PC-9 (cell line): ENCODE measurements at regions of chr5 and their contacts with region 1.

Region 1: DNA sequence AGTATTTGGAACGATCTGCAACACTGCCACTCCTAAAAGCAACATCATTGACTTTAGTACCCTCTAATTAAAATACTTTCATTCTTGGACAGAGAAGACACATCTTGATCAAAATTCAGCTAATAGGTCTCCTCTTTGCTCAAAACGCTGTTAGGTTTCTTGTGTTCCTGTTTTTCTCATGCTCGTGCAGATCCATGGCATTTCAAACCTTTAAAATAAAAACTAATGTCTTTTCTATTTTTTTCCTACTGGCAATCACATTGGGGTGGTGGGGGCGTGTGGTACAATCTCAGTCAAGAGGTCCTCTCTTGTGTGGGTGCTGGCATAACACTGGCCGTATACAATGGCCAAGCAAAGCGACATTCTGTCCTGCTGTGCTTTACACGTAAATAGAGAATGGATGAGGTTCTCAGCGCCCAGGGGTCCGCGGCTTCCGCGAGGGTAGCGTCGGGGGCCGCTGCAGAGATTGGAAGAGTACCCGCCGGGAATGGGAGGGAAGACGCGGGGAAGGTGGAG is 315 bp upstream of the GPR150 start:
- DNase-seq: no peak
- H3K4me3 ChIP-seq: peak overlapping the region; percentile 60; the same call in 1 of the 2 replicates
- H3K27ac ChIP-seq: no peak overlapping the region
- H3K4me1 ChIP-seq: 0 out of 2 replicates have a peak, but pooled peaks cover 4% of the 10 kb centered on the region
- H3K27me3 ChIP-seq: peaks cover 13% of the 10 kb centered on the region; the same call in 1 of the 2 replicates
- CTCF ChIP-seq: no peak

Region 2: DNA sequence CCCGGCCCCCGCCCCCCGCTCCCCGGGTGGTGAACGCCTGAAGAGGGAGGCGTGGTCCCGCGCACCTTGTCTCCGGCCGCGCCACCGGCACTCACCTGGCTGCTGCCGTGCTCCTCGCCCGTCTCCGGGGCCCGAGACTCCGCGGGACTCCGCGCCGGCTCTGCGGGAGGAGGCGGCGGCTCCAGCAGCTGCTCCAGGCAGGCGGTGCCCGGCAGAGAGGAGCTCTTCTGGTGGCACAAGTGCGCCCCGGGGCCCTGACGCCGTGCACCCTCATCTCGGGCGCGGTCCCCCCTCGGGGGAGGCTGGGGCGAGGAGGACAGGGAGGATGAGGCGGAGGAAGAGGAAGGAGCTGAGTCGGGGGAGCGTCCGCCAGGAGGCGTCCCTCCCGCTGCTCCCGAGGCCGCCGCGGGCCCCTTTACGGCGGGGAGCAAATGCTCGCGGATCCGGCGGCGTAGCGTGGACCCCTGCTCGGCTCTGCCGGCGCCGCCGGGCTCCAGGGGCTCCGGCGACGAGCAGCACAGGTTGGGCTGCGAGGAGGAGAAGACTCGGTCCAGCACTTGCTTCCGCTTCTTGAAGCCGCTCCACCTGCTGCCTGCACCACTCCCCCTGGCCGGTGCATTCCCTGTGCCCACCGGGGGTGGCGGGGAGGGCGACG is 335.7 kb before region 1 on chr5:
- CTCF ChIA-PET with region 1: no interaction called
- POLR2A ChIA-PET with region 1: no interaction called
- intact Hi-C with region 1: loop called (anchors 10 kb)
- DNase-seq: peak in 1 of 2 experiments; percentile 70
- H3K4me3 ChIP-seq: peak overlapping the region; percentile 95
- H3K27ac ChIP-seq: no peak overlapping the region
- H3K4me1 ChIP-seq: peaks cover 13% of the 10 kb centered on the region; the same call in 1 of the 2 replicates
- H3K27me3 ChIP-seq: peaks cover 17% of the 10 kb centered on the region
- CTCF ChIP-seq: peak; percentile 66

Region 3: GRCh38 chr5:95554647-95555548 is 64.7 kb before region 1 on chr5 and contains the starts of genes ARSK and SKIC3:
- CTCF ChIA-PET with region 1: no interaction called
- POLR2A ChIA-PET with region 1: no interaction called
- intact Hi-C with region 1: no loop called
- DNase-seq: peak; percentile 92 to 96
- H3K4me3 ChIP-seq: peak within 1 kb of the TSS; percentile 71
- H3K27ac ChIP-seq: peak within 1 kb of the TSS; percentile 84
- H3K4me1 ChIP-seq: peaks cover 16% of the 10 kb centered on the region
- H3K27me3 ChIP-seq: no peaks in the 10 kb centered on the region
- CTCF ChIP-seq: no peak; the same call in 1 of the 2 replicates
- total RNA-seq, gene ARSK: 5.2 and 5.8 TPM in 2 replicates
- total RNA-seq, gene SKIC3: 43.7 and 50.7 TPM in 2 replicates

Region 4: DNA sequence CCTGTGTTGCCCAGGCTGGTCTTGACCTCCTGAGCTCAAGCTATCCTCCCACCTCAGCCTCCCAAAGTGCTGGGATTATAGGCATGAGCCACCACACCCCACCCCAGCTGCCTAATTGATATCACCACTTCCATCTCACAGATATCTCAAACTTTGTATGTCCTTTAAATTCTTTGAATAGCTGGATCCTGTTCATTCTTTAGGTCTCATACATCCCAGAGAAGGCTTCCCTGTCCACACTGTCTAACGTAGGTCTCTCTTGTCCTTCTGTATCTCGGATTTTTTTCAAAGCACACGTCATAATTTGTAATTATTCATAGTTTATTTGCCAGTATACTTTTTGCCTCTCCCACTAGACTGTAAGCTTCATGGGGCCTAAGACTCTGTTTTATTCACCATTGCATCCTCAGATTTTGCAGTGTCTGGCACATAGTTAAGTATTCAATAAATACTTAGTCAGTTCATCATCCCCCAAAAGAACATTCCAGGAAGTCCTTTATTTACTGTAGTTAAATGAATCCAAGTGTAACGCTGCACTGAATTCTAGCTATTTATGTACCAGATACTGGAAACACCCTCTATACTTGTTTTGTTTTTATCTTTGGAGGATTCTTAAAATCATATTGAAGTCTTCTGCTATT is 54.2 kb before region 1 on chr5:
- CTCF ChIA-PET with region 1: no interaction called
- POLR2A ChIA-PET with region 1: no interaction called
- intact Hi-C with region 1: no loop called
- DNase-seq: no peak
- H3K4me3 ChIP-seq: no peak overlapping the region
- H3K27ac ChIP-seq: no peak overlapping the region
- H3K4me1 ChIP-seq: no peaks in the 10 kb centered on the region
- H3K27me3 ChIP-seq: no peaks in the 10 kb centered on the region
- CTCF ChIP-seq: no peak

Region 5: GRCh38 chr5:95605786-95606185 is 13.8 kb before region 1 on chr5:
- CTCF ChIA-PET with region 1: no interaction called
- POLR2A ChIA-PET with region 1: no interaction called
- intact Hi-C with region 1: no loop called
- DNase-seq: no peak
- H3K4me3 ChIP-seq: no peak overlapping the region
- H3K27ac ChIP-seq: no peak overlapping the region
- H3K4me1 ChIP-seq: no peaks in the 10 kb centered on the region
- H3K27me3 ChIP-seq: no peaks in the 10 kb centered on the region
- CTCF ChIP-seq: no peak